Posterior vena cava (tissue), 2 donors: ENCODE measurements at regions of chr12 and their contacts with region 1.

Region 1: GRCh38 chr12:12267742-12268200 is 927 bp upstream of the LRP6 start:
- DNase-seq: no peak

Region 2: GRCh38 chr12:12081836-12082497 is 185.8 kb before region 1 on chr12:
- intact Hi-C with region 1: no loop called
- DNase-seq: no peak

Region 3: DNA sequence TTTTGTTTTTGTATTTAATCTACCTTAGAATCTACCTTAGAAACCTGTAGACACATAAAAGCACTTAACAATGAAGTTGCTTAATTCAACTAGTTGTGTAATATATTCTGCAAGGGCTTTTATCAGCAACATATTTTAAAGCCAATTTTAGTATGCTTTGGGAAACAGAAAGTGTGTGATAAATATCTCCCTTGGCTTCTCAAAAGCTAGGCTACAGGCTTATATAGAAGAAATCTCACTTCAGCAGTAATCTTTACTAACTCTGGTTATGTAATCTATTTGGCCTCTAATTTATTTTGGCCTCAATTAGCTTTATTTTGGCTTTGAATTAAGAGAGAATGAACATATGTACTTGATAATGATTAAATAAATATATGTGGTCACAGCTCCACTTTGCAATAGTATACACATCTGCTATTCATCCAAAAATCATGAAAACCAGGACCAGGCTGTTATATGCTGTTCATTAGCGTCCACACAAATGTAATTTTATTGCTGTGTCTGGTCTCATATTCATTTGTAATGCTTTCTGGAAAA is 38.1 kb before region 1 on chr12:
- intact Hi-C with region 1: loop called in 1 of 2 experiments (anchors 2 kb)
- DNase-seq: no peak